Aorta (tissue), 5 donors: ENCODE measurements at regions of chr12 and their contacts with region 1.

Region 1: GRCh38 chr12:2034633-2035430 is 18.0 kb upstream of the CACNA1C start:
- DNase-seq: peak; percentile 92 to 98
- ATAC-seq: peak; percentile 95
- H3K4me3 ChIP-seq: no peak overlapping the region
- H3K27ac ChIP-seq: no peak overlapping the region
- H3K4me1 ChIP-seq: no peaks in the 10 kb centered on the region
- H3K27me3 ChIP-seq: no peaks in the 10 kb centered on the region

Region 2: DNA sequence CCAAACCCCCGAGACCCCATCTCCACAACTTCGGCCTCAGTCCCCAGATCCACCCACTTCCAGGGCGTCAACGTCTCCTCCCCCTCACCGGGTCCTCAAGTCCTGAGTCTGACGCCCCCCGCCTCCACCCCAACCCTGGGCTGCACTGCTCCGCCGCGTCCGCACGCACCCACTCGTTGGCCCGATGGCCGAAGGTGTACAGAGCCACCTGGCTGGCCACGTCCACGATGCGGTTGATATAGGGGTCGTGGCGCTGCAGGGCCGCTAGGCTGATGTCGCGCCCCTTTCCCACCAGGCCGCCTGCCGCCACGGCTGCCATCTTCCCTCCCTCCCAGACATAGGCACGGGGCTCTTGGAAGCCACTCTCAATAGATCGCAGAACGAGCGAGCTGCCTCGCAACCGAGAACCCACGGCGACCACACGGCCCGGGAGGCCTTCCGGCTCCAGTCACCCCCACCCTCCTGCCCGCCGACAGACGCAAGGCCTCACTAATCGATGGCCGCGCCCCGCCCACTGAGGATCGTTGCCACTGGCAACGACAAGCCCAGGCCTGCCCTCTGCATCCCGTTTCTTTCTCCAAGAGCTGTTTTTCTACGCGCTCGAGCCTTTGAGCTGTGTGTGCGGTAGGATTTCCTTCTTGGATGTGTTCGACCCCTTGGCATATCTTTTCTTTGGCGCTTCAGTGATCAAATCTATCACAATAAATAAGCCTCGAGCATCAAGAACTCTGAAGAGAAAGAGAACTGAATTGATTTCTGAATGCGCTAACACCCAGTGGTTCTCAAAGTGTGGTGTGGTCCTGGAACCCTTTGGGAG is 30.5 kb before region 1 on chr12 and contains the start of gene DCP1B:
- intact Hi-C with region 1: loop called in 1 of 2 experiments (anchors 5 kb)
- DNase-seq: peak; percentile 99
- ATAC-seq: peak; percentile 100
- H3K4me3 ChIP-seq: peak within 1 kb of the TSS; percentile 3 to 80
- H3K27ac ChIP-seq: peak within 1 kb of the TSS in 1 of 2 donors; percentile 24
- H3K4me1 ChIP-seq: peaks cover 4 to 5% of the 10 kb centered on the region in 2 donors
- H3K27me3 ChIP-seq: no peaks in the 10 kb centered on the region
- total RNA-seq, gene DCP1B: 14.5 to 16.9 TPM

Region 3: DNA sequence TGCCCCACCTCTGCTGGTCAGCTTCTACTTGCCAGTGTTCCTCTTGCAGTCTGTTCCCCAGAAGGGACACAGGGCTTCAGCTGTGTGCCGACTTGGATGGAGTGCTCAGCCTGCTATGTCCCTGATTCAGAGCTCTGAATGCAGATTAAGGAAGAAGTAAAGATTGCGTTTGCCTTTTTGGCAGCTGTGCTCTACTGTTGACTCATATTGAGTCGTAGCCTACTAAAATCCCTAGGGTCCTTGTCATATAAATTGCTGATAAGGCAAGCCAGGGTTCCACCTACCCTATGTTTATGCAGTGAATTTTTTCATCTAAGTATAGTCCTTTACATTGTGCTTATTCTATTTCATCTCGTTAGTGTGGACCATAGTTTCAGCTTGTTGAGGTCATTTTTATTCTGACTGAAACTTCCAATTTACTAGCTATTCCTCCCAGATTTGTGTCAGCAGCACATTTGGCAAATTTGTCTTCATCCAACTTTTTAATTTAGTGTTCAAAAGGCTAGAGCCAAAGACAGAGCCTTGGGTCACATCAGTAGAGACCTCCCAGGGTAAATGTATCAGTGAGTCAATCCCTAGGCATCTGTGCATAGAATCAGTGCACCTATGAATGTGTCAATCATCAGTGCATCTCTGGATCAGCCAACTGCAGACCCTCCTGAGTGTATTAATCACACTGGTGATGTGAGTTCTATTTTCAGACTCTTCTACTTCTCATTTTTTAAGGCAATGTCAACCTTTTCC is 49.9 kb after region 1 on chr12:
- intact Hi-C with region 1: no loop called
- DNase-seq: peak; percentile 70 to 82
- ATAC-seq: peak; percentile 82
- H3K4me3 ChIP-seq: no peak overlapping the region
- H3K27ac ChIP-seq: peak overlapping the region; percentile 44 to 75
- H3K4me1 ChIP-seq: peaks cover 0 to 18% of the 10 kb centered on the region in 2 donors
- H3K27me3 ChIP-seq: no peaks in the 10 kb centered on the region

Region 4: GRCh38 chr12:2212971-2213869 is 178.4 kb after region 1 on chr12:
- intact Hi-C with region 1: no loop called
- DNase-seq: no peak
- ATAC-seq: peak; percentile 35
- H3K4me3 ChIP-seq: no peak overlapping the region
- H3K27ac ChIP-seq: peak overlapping the region in 1 of 2 donors; percentile 13
- H3K4me1 ChIP-seq: peaks cover 2 to 7% of the 10 kb centered on the region in 2 donors
- H3K27me3 ChIP-seq: no peaks in the 10 kb centered on the region

Region 5: GRCh38 chr12:2336409-2336829 is 301.6 kb after region 1 on chr12:
- intact Hi-C with region 1: no loop called
- DNase-seq: peak; percentile 72 to 76
- ATAC-seq: peak; percentile 75
- H3K4me3 ChIP-seq: no peak overlapping the region
- H3K27ac ChIP-seq: peak overlapping the region; percentile 80 to 99
- H3K4me1 ChIP-seq: peaks cover 9 to 18% of the 10 kb centered on the region in 2 donors
- H3K27me3 ChIP-seq: no peaks in the 10 kb centered on the region